ENCODE measurements at regions of chr17 and their contacts with region 1.

Region 1: GRCh38 chr17:82292251-82293154 is 19.0 kb upstream of the CSNK1D start:
- H3K4me3 ChIP-seq: peak overlapping the region; percentile 57
- H3K27ac ChIP-seq: peak overlapping the region; percentile 78
- H3K4me1 ChIP-seq: peaks cover 13% of the 10 kb centered on the region
- CTCF ChIP-seq: no peak

Region 2: DNA sequence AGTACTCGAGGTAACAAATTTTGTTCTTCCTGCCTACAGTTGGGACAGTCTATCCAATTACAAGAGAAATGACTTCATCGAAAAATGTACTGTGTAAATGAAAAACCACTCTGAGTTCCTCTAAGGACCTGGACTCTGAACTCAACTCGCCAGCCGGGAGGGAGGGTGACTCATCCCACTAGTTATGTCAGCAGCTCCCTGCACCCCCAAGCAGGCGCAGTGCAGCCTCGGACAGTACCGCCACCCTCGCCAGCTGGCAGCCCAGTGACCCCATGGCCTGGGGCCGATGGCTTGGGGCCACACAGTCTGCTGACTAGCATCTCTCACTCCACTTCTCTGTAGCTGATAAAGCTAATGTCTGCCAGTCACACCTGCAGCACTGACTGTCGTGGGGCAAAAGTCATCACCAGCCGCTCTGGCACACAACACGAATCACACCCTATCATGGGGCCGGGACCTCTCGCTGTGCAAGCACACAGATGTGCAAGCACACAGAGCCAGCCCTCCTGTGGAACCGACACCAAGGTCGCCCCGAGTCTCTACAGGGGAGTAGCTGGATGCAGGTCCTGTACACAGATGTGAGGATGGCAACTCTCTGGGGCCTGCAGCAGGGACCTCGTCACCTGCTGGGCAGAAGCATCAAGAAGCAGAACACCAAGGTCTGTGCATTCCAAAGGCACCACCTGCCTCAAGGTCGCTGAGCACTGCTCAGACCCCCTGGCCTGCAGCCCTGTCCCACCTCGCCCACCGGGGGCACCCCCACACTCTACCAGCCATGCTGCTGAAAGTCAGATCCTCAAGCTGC is 24.7 kb before region 1 on chr17:
- CTCF ChIA-PET with region 1: no interaction called
- POLR2A ChIA-PET with region 1: interaction called, 28 read pairs
- H3K4me3 ChIP-seq: peak overlapping the region; percentile 14
- H3K27ac ChIP-seq: peak overlapping the region; percentile 39
- H3K4me1 ChIP-seq: peaks cover 26% of the 10 kb centered on the region
- CTCF ChIP-seq: peak; percentile 51; the same call in 1 of the 2 replicates

Region 3: DNA sequence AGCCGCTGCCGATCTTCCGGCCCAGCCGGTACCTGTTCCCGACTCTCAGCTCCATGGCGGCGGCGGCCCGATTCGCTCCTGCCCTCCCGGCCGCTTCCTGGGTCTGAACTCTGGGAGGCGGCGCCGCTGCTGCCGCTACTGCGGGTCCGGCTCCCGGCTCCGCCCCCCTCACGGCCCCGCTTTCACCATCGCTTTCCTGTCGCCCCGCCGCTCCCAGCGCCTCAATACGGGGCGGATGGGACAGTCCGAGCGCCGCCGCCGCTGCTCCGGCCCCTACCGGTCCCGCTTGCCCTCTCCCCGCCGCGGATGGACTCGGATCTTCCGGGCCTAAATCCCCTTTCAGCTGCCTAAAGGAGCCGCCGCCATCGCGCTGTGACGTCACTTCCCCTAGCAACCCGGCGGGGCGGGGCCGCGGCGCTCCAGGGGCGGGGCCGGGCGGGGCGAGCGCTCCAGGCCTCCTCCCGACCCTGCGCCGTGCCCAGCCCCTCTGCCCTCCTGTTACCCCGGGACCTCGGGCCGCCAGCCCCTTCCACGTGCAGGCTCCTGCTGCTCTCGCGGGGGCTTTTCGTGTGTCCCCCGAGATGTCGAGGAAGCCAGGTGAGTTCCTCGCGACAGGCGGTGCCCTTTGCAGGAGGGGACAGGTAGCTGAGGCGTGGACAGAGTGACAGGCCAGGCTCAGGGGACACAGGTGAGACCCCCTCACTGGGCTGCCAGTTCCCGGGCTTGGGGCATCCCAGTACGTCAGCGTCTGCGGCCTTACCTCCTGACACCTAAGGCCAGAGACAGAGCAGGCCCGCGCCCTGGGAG is 19.0 kb before region 1 on chr17 and contains the start of gene CSNK1D:
- CTCF ChIA-PET with region 1: interaction called, 4 read pairs
- POLR2A ChIA-PET with region 1: interaction called, 28 read pairs
- H3K4me3 ChIP-seq: peak within 1 kb of the TSS; percentile 87
- H3K27ac ChIP-seq: peak within 1 kb of the TSS; percentile 100
- H3K4me1 ChIP-seq: peaks cover 19% of the 10 kb centered on the region
- CTCF ChIP-seq: peak; percentile 62

Region 4: GRCh38 chr17:82330322-82331239 is 38.1 kb after region 1 on chr17:
- CTCF ChIA-PET with region 1: no interaction called
- POLR2A ChIA-PET with region 1: interaction called, 12 read pairs
- H3K4me3 ChIP-seq: no peak overlapping the region
- H3K27ac ChIP-seq: peak overlapping the region; percentile 19; the same call in 1 of the 2 replicates
- H3K4me1 ChIP-seq: peaks cover 21% of the 10 kb centered on the region
- CTCF ChIP-seq: no peak